IMR-90 (cell line): ENCODE measurements at regions of chr11 and their contacts with region 1.

Region 1: GRCh38 chr11:114280696-114281095 is 15.5 kb upstream of the NNMT start:
- DNase-seq: peak; percentile 85
- ATAC-seq: peak; percentile 97
- H3K4me3 ChIP-seq: no peak overlapping the region
- H3K27ac ChIP-seq: peak overlapping the region; percentile 44
- H3K4me1 ChIP-seq: peaks cover 15% of the 10 kb centered on the region
- H3K27me3 ChIP-seq: peaks cover 2% of the 10 kb centered on the region; the same call in 1 of the 2 replicates
- CTCF ChIP-seq: peak; percentile 93
- POLR2A ChIP-seq: peak; percentile 58
- RAD21 ChIP-seq: peak; percentile 97

Region 2: DNA sequence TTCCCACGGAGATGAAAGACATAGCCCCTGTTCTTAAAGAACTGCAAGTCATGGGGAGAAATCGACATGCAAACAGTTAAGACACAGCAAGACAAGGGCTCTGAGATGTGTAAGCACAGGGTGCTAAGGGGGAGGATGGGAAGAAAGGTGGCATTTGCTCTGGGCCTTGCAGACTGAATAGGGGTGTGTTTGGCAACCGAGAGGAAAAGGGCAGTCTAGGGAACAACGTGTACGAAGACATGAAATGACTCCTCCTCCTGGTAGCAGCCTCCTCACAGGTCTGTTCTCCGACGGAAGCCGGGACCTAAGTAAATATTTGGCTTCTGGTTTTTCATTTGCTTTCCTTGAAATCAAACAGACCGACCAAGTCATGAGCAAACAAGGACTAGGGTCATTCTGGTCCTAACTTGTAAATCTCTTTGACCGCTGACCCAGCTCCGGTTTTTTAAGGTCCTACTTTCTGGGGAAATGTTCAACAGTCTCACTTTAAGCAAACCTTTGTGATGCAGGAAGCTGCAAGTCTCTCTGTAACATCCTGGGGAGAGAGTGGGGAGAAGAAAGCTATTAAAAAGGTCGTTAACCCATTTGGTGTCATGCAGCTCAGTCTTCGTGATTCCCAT is 35.2 kb after region 1 on chr11:
- CTCF ChIA-PET with region 1: interaction called, 3 read pairs
- POLR2A ChIA-PET with region 1: no interaction called
- dilution Hi-C with region 1: no loop called
- in situ Hi-C with region 1: no loop called
- intact Hi-C with region 1: loop called (anchors 2 kb)
- DNase-seq: no peak
- ATAC-seq: no peak
- H3K4me3 ChIP-seq: no peak overlapping the region
- H3K27ac ChIP-seq: no peak overlapping the region
- H3K4me1 ChIP-seq: peaks cover 2% of the 10 kb centered on the region; the same call in 1 of the 2 replicates
- H3K27me3 ChIP-seq: no peaks in the 10 kb centered on the region
- CTCF ChIP-seq: no peak
- POLR2A ChIP-seq: no peak
- RAD21 ChIP-seq: no peak

Region 3: GRCh38 chr11:114400217-114400914 is 119.7 kb after region 1 on chr11 and contains the starts of genes C11orf71 and RBM7:
- CTCF ChIA-PET with region 1: no interaction called
- POLR2A ChIA-PET with region 1: no interaction called
- dilution Hi-C with region 1: no loop called
- in situ Hi-C with region 1: no loop called
- intact Hi-C with region 1: loop called (anchors 5 kb)
- DNase-seq: peak; percentile 99
- ATAC-seq: peak; percentile 92
- H3K4me3 ChIP-seq: peak within 1 kb of the TSS; percentile 72
- H3K27ac ChIP-seq: peak within 1 kb of the TSS; percentile 97
- H3K4me1 ChIP-seq: peaks cover 5% of the 10 kb centered on the region; the same call in 1 of the 2 replicates
- H3K27me3 ChIP-seq: no peaks in the 10 kb centered on the region
- CTCF ChIP-seq: no peak
- POLR2A ChIP-seq: peak; percentile 94
- RAD21 ChIP-seq: 0 out of 2 replicates have a peak, but pooled peaks have one; percentile 3
- total RNA-seq, gene C11orf71: 2.3 and 3.6 TPM in 2 replicates
- total RNA-seq, gene RBM7: 110 and 111 TPM in 2 replicates

Region 4: GRCh38 chr11:114586797-114587196 is 306.1 kb after region 1 on chr11:
- CTCF ChIA-PET with region 1: no interaction called
- POLR2A ChIA-PET with region 1: no interaction called
- dilution Hi-C with region 1: no loop called
- in situ Hi-C with region 1: no loop called
- intact Hi-C with region 1: loop called (anchors 1 kb)
- DNase-seq: peak; percentile 10
- ATAC-seq: no peak
- H3K4me3 ChIP-seq: no peak overlapping the region
- H3K27ac ChIP-seq: no peak overlapping the region
- H3K4me1 ChIP-seq: no peaks in the 10 kb centered on the region
- H3K27me3 ChIP-seq: no peaks in the 10 kb centered on the region
- CTCF ChIP-seq: peak; percentile 47
- POLR2A ChIP-seq: no peak
- RAD21 ChIP-seq: peak; percentile 57

Region 5: DNA sequence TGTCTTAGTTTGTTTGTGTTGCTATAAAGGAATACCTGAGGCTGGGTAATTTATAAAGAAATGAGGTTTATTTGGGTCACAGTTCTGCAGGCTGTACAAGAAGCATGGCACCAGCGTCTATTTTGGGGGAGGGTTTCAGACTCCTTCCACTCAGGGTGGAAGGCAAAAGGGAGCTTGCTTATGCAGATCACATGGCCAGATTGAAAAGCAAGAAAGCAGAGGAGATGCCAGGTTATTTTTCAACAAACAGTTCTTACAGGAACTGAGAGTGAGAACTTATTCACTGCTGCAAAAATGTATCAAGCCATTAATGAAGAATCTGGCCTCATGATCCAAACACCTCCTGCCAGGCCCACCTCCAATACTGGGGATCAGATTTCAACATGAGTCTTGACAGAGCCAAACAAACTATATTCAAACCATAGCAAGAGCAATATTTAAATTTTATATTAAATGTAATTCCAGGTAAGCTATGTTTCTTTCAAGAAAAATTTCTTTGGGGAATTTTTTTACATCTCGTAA is 464.5 kb after region 1 on chr11:
- CTCF ChIA-PET with region 1: no interaction called
- POLR2A ChIA-PET with region 1: no interaction called
- dilution Hi-C with region 1: no loop called
- in situ Hi-C with region 1: loop called (anchors 5 kb)
- intact Hi-C with region 1: no loop called
- DNase-seq: no peak
- ATAC-seq: no peak
- H3K4me3 ChIP-seq: no peak overlapping the region
- H3K27ac ChIP-seq: no peak overlapping the region
- H3K4me1 ChIP-seq: no peaks in the 10 kb centered on the region
- H3K27me3 ChIP-seq: no peaks in the 10 kb centered on the region
- CTCF ChIP-seq: no peak
- POLR2A ChIP-seq: no peak
- RAD21 ChIP-seq: no peak

Region 6: DNA sequence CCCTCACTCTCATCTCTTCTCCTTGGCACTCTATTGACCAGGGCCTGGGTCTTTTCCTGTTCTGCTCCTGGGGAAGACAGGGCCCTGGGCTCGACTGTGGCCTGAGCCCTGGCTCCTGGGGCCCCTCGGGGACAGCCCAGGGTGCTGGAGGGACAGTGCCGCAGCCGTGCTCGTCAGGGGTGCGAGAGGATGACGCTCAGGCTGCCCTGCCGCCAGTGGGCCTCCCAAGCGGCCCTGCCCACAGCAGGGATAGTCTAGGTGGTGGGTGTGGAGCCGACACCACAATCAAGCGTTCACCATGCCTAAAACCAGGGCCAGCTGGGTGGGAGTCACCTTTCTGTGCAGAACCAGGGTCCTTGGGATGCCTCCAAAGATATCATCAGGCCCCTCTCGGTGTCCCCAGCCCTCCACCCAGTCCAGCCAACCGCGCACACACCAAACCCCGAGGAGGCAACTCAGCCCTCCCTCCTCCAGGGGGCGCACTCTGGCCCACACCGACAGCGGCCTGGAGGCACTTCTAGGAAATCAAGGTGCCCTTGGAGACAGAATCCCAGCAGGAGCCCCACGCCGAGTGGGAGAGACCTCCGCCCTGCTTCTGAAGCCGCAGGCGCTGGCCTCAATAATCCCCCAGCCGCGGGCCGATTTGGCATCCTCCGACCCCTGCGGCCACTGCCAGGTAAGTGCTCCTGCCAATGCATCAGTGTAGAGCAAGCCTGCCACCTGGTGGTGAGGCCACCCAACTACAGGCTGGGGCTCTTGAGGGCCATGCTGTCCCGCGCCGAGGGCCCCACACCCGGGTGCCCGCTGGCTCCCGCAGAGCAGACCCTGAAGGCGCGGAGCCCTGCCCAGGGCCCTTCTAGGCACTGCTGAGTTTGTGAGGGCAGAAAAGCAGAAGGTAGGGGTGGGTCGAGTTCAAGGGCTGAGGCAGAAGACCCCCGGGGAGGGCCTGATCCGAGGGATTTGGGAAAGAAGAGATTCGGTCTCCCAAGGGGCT is 1995.7 kb after region 1 on chr11:
- CTCF ChIA-PET with region 1: no interaction called
- POLR2A ChIA-PET with region 1: no interaction called
- dilution Hi-C with region 1: no loop called
- in situ Hi-C with region 1: no loop called
- intact Hi-C with region 1: loop called (anchors 5 kb)
- DNase-seq: peak; percentile 30
- ATAC-seq: peak; percentile 60; the same call in 1 of the 2 replicates
- H3K4me3 ChIP-seq: no peak overlapping the region
- H3K27ac ChIP-seq: no peak overlapping the region
- H3K4me1 ChIP-seq: no peaks in the 10 kb centered on the region
- H3K27me3 ChIP-seq: no peaks in the 10 kb centered on the region; the same call in 1 of the 2 replicates
- CTCF ChIP-seq: peak; percentile 63
- POLR2A ChIP-seq: no peak
- RAD21 ChIP-seq: peak; percentile 74